ENCODE measurements at regions of chr2 and their contacts with region 1.

Region 1: GRCh38 chr2:27807476-27807875 is 36.0 kb downstream of the MRPL33 start:
- DNase-seq: peak; percentile 36
- ATAC-seq: peak; percentile 95
- H3K4me3 ChIP-seq: no peak overlapping the region
- H3K27ac ChIP-seq: no peak overlapping the region
- H3K4me1 ChIP-seq: peaks cover 15% of the 10 kb centered on the region
- H3K27me3 ChIP-seq: no peaks in the 10 kb centered on the region
- CTCF ChIP-seq: peak; percentile 73
- EP300 ChIP-seq: no peak
- POLR2A ChIP-seq: no peak
- RAD21 ChIP-seq: peak; percentile 78

Region 2: DNA sequence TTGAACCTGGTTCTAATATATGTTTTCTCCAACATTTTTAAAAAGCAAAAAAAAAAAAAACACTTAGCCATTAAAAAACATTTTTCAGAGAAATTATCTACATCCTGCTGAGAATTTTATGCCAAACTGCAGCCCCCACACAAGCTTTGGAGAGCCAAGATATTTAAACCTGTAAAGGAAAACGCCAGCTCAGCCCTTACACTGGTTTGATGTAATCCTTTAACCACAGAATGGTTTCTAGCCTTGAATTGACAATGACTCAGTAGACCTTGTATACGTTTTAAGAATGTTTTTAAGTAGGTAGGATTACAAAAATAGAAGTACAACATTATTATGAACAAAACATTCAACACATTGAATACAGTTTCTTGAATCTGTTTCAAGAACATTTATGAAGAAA is 196.6 kb after region 1 on chr2:
- CTCF ChIA-PET with region 1: no interaction called
- POLR2A ChIA-PET with region 1: no interaction called
- in situ Hi-C with region 1: no loop called
- intact Hi-C with region 1: loop called (anchors 10 kb)
- DNase-seq: no peak
- ATAC-seq: no peak
- H3K4me3 ChIP-seq: no peak overlapping the region
- H3K27ac ChIP-seq: no peak overlapping the region
- H3K4me1 ChIP-seq: peaks cover 8% of the 10 kb centered on the region; the same call in 1 of the 2 replicates
- H3K27me3 ChIP-seq: no peaks in the 10 kb centered on the region
- CTCF ChIP-seq: no peak
- EP300 ChIP-seq: no peak
- POLR2A ChIP-seq: no peak
- RAD21 ChIP-seq: no peak